Endothelial cell of umbilical vein (primary cell): ENCODE measurements at regions of chr2 and their contacts with region 1.

Region 1: DNA sequence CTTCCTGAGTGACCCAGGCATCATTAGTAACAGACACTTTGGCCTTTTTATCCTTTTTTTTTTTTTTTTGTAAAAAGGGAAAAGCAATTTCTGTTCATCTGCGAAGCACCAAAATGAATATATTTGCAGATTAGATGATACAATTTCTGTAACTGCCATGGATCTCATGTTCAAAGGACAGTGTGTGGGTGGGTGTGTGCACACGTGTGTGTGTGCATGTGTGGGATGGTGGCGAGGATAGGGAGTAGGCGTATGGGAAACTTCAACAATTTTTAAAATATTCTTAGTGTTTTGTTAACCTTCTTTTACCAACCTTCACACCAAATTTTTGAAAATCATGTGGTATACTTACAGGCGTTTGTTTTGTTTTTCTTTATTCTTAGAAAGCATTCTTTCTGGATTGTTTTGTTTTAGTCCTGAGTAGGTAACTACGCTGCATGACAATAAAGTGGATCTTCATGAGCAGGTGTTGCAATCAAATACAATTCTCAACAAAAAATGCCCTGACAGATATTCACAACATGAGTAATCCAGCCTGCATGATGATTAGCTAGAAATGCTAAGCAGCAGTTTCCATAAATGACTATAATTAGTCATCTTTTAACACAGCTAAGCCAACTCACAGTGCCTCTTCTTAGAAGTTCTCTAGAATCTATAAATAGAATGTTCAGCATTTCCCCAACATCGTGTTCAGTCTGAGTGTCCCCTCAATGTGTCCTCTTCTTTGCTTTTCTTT is 53.5 kb upstream of the RMDN2 start:
- DNase-seq: peak; percentile 32
- H3K4me3 ChIP-seq: no peak overlapping the region
- H3K27ac ChIP-seq: no peak overlapping the region
- H3K4me1 ChIP-seq: peaks cover 9% of the 10 kb centered on the region
- H3K27me3 ChIP-seq: no peaks in the 10 kb centered on the region
- CTCF ChIP-seq: no peak
- POLR2A ChIP-seq: no peak

Region 2: DNA sequence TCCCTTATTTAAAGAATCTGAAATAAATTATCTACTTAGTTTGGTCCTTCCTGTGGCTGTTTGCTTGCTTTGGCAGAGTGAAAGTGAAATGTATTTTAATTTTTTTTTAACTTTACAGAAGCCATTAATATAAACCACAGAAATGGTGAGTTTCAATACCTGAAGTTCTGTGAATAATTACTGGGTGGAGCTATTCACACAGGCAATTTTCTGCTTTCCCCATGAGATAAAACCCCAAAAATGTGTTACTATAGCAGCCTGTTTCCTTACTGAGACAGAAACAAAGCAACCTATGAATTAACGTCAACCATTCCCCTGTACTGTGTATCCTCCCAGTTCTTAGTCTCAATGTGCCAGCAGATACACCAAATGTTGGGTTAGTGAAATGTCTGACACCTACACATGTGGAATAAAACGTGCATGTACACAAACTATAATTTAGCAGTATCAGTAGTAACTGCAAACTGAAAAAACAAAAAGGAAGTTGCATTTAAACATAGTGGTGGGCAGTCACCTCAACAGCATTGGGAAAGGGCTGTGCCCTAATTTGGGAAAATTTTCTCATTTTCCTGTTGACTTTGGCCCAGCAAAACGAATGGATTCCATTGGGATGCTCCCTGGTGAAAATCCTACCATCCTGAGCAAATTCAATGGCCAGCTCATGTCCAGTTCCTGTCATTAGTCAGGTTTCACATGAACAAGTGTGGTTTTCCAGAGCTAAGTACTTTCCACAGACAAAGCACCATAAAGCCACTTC is 19.6 kb before region 1 on chr2:
- CTCF ChIA-PET with region 1: interaction called, 97 read pairs
- POLR2A ChIA-PET with region 1: no interaction called
- dilution Hi-C with region 1: no loop called
- intact Hi-C with region 1: loop called (anchors 2 kb)
- DNase-seq: no peak
- H3K4me3 ChIP-seq: no peak overlapping the region
- H3K27ac ChIP-seq: no peak overlapping the region
- H3K4me1 ChIP-seq: peaks cover 41% of the 10 kb centered on the region
- H3K27me3 ChIP-seq: no peaks in the 10 kb centered on the region
- CTCF ChIP-seq: no peak
- POLR2A ChIP-seq: no peak

Region 3: DNA sequence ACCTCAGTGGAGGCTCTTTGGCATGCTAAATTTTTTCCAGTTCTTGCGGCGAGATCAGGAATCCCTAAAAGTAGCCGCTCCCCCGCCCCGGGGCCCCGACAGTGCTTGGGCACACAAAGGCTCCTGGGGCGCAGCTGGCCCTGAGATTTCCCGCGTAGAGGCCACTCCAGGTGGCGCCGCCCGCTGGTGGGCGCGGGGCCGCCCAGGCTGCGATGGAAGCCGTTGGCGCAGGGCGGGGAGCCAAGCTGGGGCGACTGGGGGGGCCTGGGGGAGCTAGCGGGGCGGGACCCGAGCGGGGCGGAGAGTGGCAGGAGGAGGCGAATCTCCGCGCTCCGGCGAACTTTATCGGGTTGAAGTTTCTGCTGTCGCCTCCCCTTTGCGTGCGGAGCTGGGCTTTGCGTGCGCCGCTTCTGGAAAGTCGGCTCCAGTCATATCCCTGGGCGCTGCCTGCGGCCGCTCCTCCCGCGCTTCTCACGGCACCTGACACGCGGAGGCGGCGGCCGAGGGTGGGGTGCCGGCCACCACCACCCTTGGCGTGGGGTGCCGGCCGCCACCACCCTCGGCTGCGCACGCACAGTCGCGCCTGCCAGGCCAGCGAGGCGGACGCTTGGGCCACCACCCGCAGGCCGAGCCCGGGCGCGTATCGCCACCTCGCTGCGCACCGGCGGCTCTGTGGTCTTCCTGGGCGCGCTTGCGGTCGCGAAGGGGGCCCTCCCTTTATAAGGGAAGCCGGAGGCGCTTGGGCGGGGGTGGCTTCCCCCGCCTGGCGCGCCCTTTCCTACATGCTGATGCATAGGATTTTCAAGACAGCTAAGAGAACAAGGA is 205.2 kb after region 1 on chr2:
- CTCF ChIA-PET with region 1: no interaction called
- POLR2A ChIA-PET with region 1: no interaction called
- dilution Hi-C with region 1: no loop called
- intact Hi-C with region 1: no loop called
- DNase-seq: no peak
- H3K4me3 ChIP-seq: peak overlapping the region; percentile 30 to 34 (median 32)
- H3K27ac ChIP-seq: no peak overlapping the region
- H3K4me1 ChIP-seq: peaks cover 16% of the 10 kb centered on the region
- H3K27me3 ChIP-seq: peaks cover 44 to 51% of the 10 kb centered on the region in 2 experiments
- CTCF ChIP-seq: peak in 1 of 2 donors; percentile 23
- POLR2A ChIP-seq: no peak